Activated CD4-positive, alpha-beta T cell treated with anti-CD3 and anti-CD28 coated beads, Interleukin-2, amount 10 ng/mL, durations not matched to agents 24 days and 14 days (primary cell): ENCODE measurements at regions of chr10 and their contacts with region 1.

Region 1: DNA sequence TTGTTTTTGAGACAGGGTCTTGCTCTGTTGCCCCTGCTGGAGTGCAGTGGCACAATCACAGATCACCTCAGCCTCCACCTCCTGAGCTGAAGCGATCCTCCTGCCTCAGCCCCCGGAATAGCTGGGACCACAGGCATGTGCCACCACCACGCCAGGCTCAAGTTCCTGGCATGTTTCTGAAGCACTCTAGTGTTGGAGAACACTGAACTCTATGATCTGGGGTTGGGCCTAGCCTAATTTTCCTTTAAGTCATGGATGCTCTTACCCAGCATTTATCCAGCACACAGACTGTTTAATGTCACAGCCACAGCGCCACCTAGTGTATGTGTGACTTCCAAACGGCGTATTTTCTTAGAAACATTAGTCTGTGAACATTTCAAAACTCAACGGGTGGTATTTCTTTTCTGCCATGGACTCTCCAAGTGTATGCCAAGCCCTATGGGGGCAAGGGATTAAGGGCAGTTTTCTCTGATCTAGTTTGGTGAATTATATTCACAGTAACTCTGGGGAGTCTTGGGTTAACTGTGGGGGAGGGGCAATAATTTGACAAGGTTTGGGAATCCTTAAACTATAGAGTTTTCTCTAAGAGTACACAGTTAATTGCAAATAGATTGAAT is 91.8 kb downstream of the CREM start:
- DNase-seq: peak; percentile 95
- H3K4me3 Mint-ChIP-seq: peak overlapping the region; percentile 77
- H3K27ac Mint-ChIP-seq: peak overlapping the region; percentile 97
- H3K4me1 Mint-ChIP-seq: peaks cover 55% of the 10 kb centered on the region
- H3K27me3 Mint-ChIP-seq: no peaks in the 10 kb centered on the region

Region 2: DNA sequence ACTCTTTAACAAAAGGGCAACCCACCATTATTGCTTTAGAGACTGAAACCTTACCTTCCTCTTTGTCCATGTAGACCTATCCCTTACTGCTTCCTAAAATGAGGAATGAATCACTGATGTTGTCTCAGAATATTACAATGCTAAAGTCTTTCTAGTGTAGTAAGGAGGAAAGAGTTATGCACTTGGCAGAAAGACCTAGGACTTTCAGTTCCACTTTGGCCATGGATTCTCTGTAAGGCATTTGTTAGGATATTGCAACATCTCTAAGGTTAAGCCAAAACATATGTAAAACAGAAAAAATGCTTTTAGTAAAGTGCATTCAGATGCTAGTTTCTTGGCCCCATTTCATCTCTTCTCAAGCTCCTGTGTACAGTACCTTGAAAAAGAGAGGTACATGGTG is 634.3 kb before region 1 on chr10:
- intact Hi-C with region 1: no loop called
- DNase-seq: no peak
- H3K4me3 Mint-ChIP-seq: no peak overlapping the region
- H3K27ac Mint-ChIP-seq: no peak overlapping the region
- H3K4me1 Mint-ChIP-seq: no peaks in the 10 kb centered on the region
- H3K27me3 Mint-ChIP-seq: peaks cover 3% of the 10 kb centered on the region

Region 3: DNA sequence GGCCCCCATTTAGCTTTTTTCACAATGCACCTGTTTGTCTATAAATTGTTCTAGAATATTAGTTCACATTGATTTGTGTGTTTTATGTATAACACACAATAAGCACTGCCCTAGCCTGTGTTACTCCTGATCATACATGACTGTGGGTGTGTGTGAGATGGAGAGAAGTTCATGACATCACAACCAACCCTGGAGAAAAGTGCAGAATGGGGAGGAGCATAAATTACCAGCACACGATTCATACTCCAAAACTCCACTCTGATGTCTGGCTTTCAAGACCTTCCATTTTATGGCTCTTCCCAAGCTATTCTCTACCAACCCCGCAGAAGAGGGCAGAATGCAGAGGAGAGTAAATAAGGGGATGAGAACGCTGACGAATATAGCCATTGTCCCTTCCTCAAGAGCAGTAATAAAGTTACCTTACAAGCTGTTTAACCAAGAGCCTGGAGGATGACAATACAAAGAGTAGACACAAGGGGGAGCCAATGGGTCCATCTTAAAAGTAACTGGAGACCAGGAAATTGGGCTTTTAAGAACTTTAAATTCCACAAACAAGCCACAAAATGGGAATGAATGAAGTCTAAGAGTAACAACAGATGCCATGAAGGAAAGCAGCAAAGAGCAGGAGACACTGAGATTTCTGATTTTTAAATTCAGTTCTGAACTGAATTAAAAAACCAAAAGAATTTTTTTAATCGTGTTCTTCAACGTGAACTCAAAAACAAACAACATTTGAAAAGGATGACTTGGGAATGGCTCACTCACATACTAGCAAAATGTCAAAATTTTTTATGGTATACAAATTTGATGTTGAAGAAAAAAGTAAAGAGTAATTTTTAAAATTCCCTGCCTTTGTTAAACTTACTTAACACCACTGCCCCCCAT is 562.9 kb before region 1 on chr10:
- intact Hi-C with region 1: loop called (anchors 5 kb)
- DNase-seq: peak; percentile 79
- H3K4me3 Mint-ChIP-seq: no peak overlapping the region
- H3K27ac Mint-ChIP-seq: no peak overlapping the region
- H3K4me1 Mint-ChIP-seq: no peaks in the 10 kb centered on the region
- H3K27me3 Mint-ChIP-seq: no peaks in the 10 kb centered on the region

Region 4: DNA sequence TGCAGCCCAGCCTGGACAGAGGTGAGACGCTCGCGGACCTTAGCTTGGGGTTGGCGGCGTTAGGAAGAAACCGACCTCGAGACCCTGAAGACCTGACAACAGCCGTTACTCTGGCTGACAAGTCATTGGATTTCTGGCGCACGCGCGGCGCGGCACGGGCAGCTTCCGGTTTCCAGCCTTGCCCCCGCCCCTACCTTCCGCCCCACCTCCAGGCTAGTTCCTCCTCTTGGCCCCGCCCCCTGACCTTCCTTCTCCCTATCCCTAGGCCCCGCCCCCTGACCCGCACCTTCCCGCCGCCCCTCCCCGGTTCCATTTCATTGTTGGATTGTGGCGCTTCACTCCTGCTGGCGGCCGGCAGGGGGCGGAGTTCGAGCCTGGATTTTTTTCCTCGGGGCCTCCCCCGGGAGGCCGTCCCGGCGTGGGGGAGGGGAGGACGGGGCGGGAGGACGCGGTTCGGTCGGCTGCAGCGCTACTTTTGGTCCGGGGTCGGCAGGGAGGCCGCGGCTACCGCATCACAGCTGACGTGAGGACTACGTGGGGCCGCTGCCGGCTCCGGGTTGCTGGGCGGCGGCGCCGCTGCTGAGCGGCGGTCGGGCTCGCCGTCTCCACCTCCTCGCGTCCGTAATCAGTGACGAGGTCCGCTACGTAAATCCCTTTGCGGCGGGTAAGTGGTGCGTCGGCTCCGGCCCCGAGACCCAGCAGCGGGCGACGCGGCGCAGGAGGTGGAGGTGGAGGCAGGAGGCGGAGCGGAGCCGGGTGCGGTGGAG is 91.7 kb before region 1 on chr10 and contains the start of gene CREM:
- intact Hi-C with region 1: loop called (anchors 1 kb)
- DNase-seq: peak; percentile 99
- H3K4me3 Mint-ChIP-seq: peak within 1 kb of the TSS; percentile 99
- H3K27ac Mint-ChIP-seq: peak within 1 kb of the TSS; percentile 99
- H3K4me1 Mint-ChIP-seq: peaks cover 46% of the 10 kb centered on the region
- H3K27me3 Mint-ChIP-seq: no peaks in the 10 kb centered on the region
- total RNA-seq, gene CREM: 87.0 and 87.8 TPM in 2 replicates

Region 5: DNA sequence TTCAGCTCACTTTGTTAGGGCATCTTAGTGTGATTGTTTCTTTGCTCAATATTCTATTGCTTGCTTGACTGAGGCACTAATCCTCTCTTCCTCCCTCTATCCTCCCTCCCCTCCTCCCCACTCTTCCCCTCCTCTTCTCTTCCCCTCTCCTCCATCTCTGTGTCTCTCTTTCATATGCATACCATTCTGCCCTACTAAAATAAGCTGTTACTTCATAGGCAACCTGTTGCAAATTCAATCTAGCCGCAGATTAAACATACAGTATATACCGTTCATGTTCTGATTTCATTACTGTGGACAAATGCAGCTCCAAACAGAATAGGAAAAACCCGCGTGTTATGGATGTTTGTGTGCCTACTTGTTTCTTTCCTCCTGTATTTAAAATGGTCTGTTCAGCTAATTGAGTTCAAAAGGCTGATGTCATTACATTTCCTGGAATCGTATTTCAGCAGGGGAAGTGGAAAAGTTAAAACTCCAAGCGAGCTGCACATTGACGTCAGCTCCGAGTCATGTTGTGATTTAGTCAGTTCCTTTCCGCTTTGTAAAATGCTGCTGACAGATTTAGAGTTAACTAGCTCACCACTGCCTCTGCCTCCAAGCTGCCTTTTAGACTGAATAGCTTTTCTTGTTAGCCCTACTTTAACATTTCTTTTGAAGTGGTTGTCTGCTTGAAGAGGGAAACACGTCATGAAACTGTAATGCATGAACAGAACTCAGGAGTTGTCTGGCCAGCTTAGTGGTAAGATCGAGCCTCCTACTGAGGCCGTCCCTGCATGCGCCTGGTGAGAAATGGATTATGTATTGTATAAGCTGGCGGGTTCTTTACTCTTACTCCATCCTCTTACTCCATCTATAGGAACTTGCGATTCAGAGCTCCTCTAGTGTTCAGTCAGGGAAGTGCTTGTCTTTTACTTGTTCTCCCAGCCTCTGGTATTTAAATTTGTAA is 22.8 kb before region 1 on chr10:
- intact Hi-C with region 1: loop called (anchors 1 kb)
- DNase-seq: peak; percentile 94
- H3K4me3 Mint-ChIP-seq: peak overlapping the region; percentile 95
- H3K27ac Mint-ChIP-seq: peak overlapping the region; percentile 99
- H3K4me1 Mint-ChIP-seq: peaks cover 41% of the 10 kb centered on the region
- H3K27me3 Mint-ChIP-seq: no peaks in the 10 kb centered on the region

Region 6: DNA sequence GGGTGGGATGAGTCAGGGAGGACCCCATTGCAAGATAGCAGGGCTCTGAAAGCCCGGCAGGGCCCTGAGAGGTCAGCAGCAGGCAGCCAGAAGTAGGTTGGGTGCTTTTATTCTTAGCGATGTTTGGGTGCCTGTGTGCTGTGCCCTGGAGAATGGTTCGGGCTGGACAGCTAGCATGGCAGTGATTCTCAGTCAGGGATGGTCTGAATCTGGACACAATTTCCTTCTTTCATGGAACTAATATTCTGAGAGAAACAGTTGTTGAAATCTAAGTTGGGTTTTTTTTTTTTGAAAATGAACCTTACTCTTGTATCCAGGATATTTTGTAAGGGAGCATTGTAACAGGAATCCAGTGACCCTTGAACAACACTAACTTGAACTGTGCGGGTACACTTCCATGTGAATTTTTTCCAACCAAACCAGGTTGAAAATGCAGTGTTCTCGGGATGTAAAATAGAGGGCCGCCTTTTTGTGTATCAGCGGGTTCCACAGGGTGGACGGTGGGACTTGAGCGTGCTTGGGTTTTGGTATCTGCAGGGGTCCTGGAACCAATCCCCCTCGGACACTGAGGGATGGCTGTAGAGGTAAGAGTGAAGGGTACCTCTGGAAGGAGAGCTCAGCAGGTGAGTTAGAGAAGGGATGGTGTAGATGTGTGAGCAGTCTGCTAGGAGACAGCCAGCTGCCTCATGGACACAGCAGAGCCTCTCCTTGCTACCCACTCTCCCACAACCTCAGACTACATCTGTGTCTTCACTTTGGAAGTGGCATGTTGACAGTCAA is 130.4 kb after region 1 on chr10:
- intact Hi-C with region 1: no loop called
- DNase-seq: no peak
- H3K4me3 Mint-ChIP-seq: no peak overlapping the region
- H3K27ac Mint-ChIP-seq: no peak overlapping the region
- H3K4me1 Mint-ChIP-seq: peaks cover 59% of the 10 kb centered on the region
- H3K27me3 Mint-ChIP-seq: no peaks in the 10 kb centered on the region

Region 7: DNA sequence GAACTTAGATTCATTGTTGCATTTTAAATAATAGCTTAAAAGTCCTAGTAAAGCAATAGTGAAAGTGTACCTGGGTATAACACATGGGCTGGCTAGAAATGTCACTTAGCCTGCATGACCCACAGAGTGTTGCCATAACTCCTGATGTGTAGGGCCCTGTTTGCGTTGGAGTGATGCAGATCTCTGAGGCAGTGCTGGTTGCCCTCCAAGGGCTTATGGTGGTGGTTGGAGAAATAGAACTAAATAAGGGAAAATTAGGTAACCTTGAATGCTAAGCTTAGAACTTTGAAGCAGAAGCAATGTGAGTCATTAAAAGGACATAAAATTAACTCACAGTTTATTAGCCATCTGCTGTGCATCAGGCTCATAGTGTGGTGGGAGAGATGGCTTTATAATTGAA is 223.6 kb after region 1 on chr10:
- intact Hi-C with region 1: loop called (anchors 2 kb)
- DNase-seq: no peak
- H3K4me3 Mint-ChIP-seq: no peak overlapping the region
- H3K27ac Mint-ChIP-seq: peak overlapping the region; percentile 80
- H3K4me1 Mint-ChIP-seq: peaks cover 33% of the 10 kb centered on the region
- H3K27me3 Mint-ChIP-seq: no peaks in the 10 kb centered on the region